HEK293 (cell line): ENCODE measurements at regions of chrX and their contacts with region 1.

Region 1: GRCh38 chrX:20530406-20530921 is 263.8 kb upstream of the RPS6KA3 start:
- H3K4me3 ChIP-seq: no peak overlapping the region; the same call in 1 of the 2 replicates
- H3K27ac ChIP-seq: no peak overlapping the region
- H3K4me1 ChIP-seq: no peaks in the 10 kb centered on the region
- CTCF ChIP-seq: no peak; the same call in 1 of the 2 replicates

Region 2: DNA sequence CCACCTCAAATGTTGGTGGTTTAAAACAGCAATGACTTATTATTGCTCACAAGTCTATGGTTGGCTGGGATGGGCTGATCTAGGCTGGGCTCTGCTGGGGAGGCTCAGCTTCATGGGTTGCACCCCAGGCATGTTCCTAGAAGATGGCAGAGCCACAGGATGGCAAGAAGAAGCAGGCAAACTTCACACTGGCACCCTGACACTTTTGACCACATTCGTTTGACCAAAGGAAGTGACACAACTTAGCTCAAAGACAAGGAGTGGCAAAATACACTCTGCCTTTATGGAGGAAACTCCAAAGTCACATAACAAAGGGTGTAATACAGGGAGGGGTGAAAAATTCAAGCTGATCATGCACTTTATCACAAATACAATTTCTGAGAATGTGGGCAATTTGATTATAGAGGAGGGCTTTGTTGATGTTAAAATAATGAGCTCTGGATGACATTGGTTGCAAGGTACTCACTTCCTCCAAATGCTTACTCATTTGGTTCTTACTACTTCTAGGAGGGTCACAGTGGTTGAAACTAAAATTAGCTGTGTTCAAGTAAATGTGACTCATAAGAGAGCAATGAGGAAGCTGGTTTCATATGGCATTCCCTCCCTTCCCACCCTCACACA is 14.5 kb before region 1 on chrX:
- CTCF ChIA-PET with region 1: interaction called, 32 read pairs
- POLR2A ChIA-PET with region 1: no interaction called
- H3K4me3 ChIP-seq: no peak overlapping the region
- H3K27ac ChIP-seq: no peak overlapping the region
- H3K4me1 ChIP-seq: no peaks in the 10 kb centered on the region
- CTCF ChIP-seq: no peak

Region 3: GRCh38 chrX:21479695-21480270 is 949.3 kb after region 1 on chrX:
- CTCF ChIA-PET with region 1: interaction called, 29 read pairs
- POLR2A ChIA-PET with region 1: no interaction called
- H3K4me3 ChIP-seq: no peak overlapping the region
- H3K27ac ChIP-seq: no peak overlapping the region
- H3K4me1 ChIP-seq: no peaks in the 10 kb centered on the region
- CTCF ChIP-seq: no peak

Region 4: GRCh38 chrX:21725496-21725895 is 1195.0 kb after region 1 on chrX:
- CTCF ChIA-PET with region 1: interaction called, 16 read pairs
- POLR2A ChIA-PET with region 1: no interaction called
- H3K4me3 ChIP-seq: no peak overlapping the region
- H3K27ac ChIP-seq: no peak overlapping the region
- H3K4me1 ChIP-seq: no peaks in the 10 kb centered on the region
- CTCF ChIP-seq: no peak

Region 5: DNA sequence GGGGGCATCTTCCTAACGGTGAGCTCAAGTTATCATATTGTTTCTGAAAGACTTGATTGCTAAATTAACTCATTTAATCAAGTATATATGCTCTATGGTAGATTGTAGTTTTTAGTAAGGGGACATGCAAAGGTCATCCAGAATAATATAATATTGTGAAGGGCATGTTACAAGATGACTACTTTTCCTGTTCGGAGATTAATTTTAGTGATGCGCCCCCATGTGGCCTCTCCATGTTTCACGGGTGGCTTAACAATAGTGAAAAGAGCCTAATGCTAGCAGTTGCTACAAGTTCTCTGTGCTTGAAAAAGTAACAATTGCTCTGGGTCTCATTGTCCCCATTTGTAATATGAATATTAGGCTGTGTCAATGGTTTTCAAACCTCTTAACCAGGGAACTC is 1215.3 kb after region 1 on chrX:
- CTCF ChIA-PET with region 1: interaction called, 13 read pairs
- POLR2A ChIA-PET with region 1: no interaction called
- H3K4me3 ChIP-seq: no peak overlapping the region
- H3K27ac ChIP-seq: no peak overlapping the region
- H3K4me1 ChIP-seq: peaks cover 5% of the 10 kb centered on the region
- CTCF ChIP-seq: no peak